ENCODE measurements at regions of chr6 and their contacts with region 1.

Region 1: GRCh38 chr6:42009966-42010891 is 40.1 kb upstream of the TAF8 start:
- DNase-seq: peak; percentile 96
- H3K4me3 ChIP-seq: peak overlapping the region; percentile 57
- H3K27ac ChIP-seq: peak overlapping the region; percentile 97
- H3K4me1 ChIP-seq: peaks cover 91% of the 10 kb centered on the region
- CTCF ChIP-seq: peak; percentile 41; the same call in 1 of the 2 replicates

Region 2: GRCh38 chr6:41247288-41247865 is 762.9 kb before region 1 on chr6:
- CTCF ChIA-PET with region 1: no interaction called
- POLR2A ChIA-PET with region 1: no interaction called
- intact Hi-C with region 1: no loop called
- DNase-seq: no peak
- H3K4me3 ChIP-seq: no peak overlapping the region
- H3K27ac ChIP-seq: no peak overlapping the region
- H3K4me1 ChIP-seq: no peaks in the 10 kb centered on the region
- CTCF ChIP-seq: no peak

Region 3: GRCh38 chr6:42028234-42029061 is 18.2 kb after region 1 on chr6:
- CTCF ChIA-PET with region 1: interaction called, 4 read pairs
- POLR2A ChIA-PET with region 1: interaction called, 26 read pairs
- intact Hi-C with region 1: no loop called
- DNase-seq: no peak
- H3K4me3 ChIP-seq: no peak overlapping the region
- H3K27ac ChIP-seq: peak overlapping the region; percentile 98
- H3K4me1 ChIP-seq: peaks cover 100% of the 10 kb centered on the region
- CTCF ChIP-seq: no peak

Region 4: GRCh38 chr6:42038811-42039408 is 28.7 kb after region 1 on chr6:
- CTCF ChIA-PET with region 1: interaction called, 3 read pairs
- POLR2A ChIA-PET with region 1: interaction called, 26 read pairs
- intact Hi-C with region 1: loop called (anchors 1 kb)
- DNase-seq: no peak
- H3K4me3 ChIP-seq: peak overlapping the region; percentile 50
- H3K27ac ChIP-seq: peak overlapping the region; percentile 84
- H3K4me1 ChIP-seq: peaks cover 65% of the 10 kb centered on the region
- CTCF ChIP-seq: no peak

Region 5: DNA sequence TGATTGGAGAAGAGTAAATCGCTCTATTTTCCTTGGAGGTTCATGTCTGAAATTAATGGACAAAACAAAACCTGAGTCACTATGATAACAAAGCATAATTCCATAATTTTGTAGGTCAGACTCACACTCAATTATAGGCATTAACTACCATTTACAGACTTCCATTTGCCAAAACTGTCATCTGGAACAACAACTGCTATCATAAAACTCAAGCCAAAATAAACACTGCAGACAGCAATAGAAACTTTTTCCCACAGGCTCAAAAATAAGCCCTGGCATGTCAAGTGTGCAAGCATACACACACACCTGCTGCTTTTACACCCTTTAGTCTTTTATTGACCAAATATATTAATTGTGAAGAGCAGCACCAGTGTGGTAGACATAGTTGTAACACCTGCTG is 200.3 kb after region 1 on chr6:
- CTCF ChIA-PET with region 1: no interaction called
- POLR2A ChIA-PET with region 1: no interaction called
- intact Hi-C with region 1: no loop called
- DNase-seq: no peak
- H3K4me3 ChIP-seq: no peak overlapping the region
- H3K27ac ChIP-seq: no peak overlapping the region
- H3K4me1 ChIP-seq: peaks cover 15% of the 10 kb centered on the region
- CTCF ChIP-seq: no peak

Region 6: DNA sequence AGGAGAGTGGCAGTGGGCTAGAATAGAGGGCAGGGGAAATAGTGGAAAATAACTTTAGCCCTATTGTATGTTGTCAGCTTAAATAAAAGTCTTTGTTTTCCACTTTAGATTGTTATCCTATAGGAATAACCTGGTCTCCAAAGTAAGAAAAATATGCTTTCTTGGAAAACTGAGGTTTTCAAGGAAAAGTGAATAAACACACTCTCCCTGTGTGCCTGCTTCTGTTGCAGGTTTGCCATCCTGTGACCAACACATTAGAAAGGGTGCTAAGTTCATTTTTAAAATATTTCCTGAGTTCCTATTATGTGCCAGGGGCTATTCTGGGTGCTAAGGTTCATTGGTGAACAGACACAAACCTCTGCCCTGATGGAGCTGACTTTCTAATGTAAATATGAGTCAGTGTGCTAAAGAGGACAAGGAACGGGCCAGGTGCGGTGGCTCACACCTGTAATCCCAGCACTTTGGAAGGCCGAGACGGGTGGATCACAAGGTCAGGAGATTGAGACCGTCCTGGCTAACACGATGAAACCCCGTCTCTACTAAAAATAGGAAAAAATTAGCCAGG is 795.1 kb after region 1 on chr6:
- CTCF ChIA-PET with region 1: no interaction called
- POLR2A ChIA-PET with region 1: no interaction called
- intact Hi-C with region 1: no loop called
- DNase-seq: no peak
- H3K4me3 ChIP-seq: no peak overlapping the region
- H3K27ac ChIP-seq: no peak overlapping the region
- H3K4me1 ChIP-seq: no peaks in the 10 kb centered on the region
- CTCF ChIP-seq: no peak